ENCODE measurements at regions of chr16 and their contacts with region 1.

Region 1: GRCh38 chr16:15509593-15510535 is 75.5 kb downstream of the BMERB1 start:
- DNase-seq: no peak

Region 2: DNA sequence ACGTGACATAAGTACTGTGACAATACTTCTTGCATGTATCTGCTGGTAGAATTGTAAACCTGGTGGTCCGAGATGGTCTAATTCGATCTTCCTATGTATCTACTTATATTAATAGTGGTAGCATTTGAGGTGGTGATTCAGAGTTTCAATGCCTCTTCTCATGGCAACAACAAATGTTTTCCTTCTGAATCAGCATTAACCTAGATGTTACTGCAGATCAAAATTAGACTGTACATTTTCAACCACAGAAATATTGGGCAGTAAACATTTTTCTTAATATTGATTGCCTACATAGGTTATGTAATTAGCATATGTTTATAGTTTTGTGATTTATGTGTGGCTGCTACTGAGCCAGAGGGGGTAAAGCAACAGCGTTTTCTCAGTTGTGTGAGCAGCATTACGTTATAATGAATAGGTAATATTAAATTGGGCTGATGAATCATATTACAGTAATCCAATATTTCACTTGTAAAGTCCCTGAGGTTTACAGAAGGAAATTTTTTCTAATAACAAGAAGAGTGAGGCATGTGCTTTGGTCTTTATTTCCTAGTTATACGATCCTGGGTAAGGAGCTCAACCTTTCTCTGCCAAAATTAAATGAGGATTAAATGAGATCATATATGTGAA is 94.3 kb before region 1 on chr16:
- in situ Hi-C with region 1: no loop called
- DNase-seq: no peak

Region 3: GRCh38 chr16:15446901-15447300 is 63.0 kb before region 1 on chr16:
- in situ Hi-C with region 1: loop called (anchors 5 kb)
- DNase-seq: no peak

Region 4: DNA sequence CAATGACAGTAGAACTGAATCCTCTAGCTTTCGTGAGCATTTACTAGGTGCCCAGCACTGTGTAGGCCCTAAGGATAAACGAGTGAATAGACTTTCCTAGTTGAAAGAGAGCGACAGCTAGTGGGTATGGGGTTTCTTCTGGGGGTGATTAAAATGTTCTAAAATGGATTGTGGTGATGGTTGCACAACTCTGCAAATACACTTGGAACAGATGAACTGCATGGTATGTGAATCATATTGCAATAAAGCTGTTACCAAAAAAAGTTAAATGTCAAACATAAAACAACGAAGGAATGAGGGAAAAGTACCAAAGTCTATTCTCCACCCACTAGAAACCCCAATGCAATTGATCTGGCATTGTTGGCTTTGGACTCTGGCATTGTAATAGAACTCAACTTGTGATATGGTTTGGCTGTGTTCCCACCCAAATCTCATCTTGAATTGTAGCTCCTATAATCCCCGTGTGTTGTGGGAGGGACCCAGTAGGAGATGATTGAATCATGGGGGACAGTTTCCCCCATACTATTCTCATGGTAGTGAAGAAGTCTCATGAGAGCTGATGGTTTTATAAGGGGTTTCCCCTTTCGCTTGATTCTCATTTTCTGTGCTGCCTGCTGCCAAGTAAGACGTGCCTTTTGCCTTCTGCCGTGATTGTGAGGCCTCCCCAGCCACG is 62.6 kb after region 1 on chr16:
- in situ Hi-C with region 1: no loop called
- DNase-seq: no peak

Measured in G401 (cell line).